Activated CD4-positive, alpha-beta T cell treated with anti-CD3 and anti-CD28 coated beads, Interleukin-2, amount 10 ng/mL, durations not matched to agents 7 days and 5 days (primary cell): ENCODE measurements at regions of chr1 and their contacts with region 1.

Region 1: DNA sequence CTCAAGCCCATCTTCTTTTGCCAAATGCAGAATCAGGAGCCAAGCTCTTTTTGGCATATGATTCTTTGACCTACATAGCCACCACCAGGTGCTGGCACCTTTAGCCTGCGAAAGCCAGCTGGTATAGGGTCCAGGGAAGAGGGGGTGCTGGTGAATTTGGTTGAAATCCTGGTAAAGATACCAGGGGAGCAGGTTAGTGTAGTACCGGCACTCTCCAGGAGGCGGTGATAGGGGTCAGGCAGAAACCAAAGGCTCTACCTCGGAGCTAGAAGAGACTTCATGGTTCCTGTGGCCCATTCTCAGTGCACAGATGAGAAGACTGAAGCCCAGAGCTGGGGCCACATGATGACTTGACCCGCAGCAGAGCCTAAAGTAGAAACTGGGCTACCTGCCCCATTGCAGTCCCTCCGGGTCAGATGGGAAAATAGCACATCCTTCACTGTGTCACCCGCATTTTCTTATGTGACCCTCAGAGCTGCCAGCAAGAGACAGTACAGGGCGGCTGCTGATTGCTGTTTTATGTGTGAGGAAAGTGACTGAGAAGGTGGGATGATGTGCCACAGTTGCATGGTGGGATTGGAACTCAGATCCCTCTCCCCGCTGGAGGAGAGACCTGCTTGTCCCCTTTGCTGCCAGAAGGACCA is 36.0 kb upstream of the IL19 start:
- DNase-seq: peak; percentile 80
- H3K4me3 Mint-ChIP-seq: no peak overlapping the region
- H3K27ac Mint-ChIP-seq: peak overlapping the region; percentile 78
- H3K4me1 Mint-ChIP-seq: peaks cover 68% of the 10 kb centered on the region
- H3K27me3 Mint-ChIP-seq: no peaks in the 10 kb centered on the region

Region 2: GRCh38 chr1:206663832-206664652 is 70.6 kb before region 1 on chr1:
- CTCF ChIA-PET with region 1: no interaction called
- POLR2A ChIA-PET with region 1: no interaction called
- DNase-seq: peak; percentile 78
- H3K4me3 Mint-ChIP-seq: no peak overlapping the region
- H3K27ac Mint-ChIP-seq: no peak overlapping the region
- H3K4me1 Mint-ChIP-seq: peaks cover 21% of the 10 kb centered on the region
- H3K27me3 Mint-ChIP-seq: peaks cover 26% of the 10 kb centered on the region

Region 3: DNA sequence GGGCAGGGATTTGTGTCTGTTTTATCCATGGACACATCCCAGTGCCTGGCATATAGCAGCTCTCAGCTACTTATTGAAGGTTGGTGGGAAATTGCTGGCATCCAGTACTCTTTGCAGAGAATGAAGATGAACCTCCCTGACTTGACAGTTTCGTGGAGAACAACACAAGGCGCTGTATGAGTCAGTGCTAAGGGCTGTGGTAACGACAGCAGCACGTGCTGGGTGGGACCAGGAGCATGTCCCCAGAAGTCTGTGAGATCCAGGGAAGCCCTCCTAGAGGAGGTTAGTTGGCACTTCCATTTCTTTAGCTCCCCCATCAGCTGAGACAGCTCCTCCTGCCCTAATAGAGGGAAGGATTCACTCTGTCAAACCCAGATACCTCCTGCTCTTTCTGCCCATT is 10.1 kb after region 1 on chr1:
- CTCF ChIA-PET with region 1: interaction called, 20 read pairs
- POLR2A ChIA-PET with region 1: no interaction called
- DNase-seq: no peak
- H3K4me3 Mint-ChIP-seq: no peak overlapping the region
- H3K27ac Mint-ChIP-seq: no peak overlapping the region
- H3K4me1 Mint-ChIP-seq: peaks cover 42% of the 10 kb centered on the region
- H3K27me3 Mint-ChIP-seq: peaks cover 11% of the 10 kb centered on the region

Region 4: GRCh38 chr1:206797534-206798383 is 63.1 kb after region 1 on chr1:
- CTCF ChIA-PET with region 1: interaction called, 102 read pairs
- POLR2A ChIA-PET with region 1: interaction called, 4 read pairs
- DNase-seq: no peak
- H3K4me3 Mint-ChIP-seq: no peak overlapping the region
- H3K27ac Mint-ChIP-seq: no peak overlapping the region
- H3K4me1 Mint-ChIP-seq: peaks cover 38% of the 10 kb centered on the region
- H3K27me3 Mint-ChIP-seq: peaks cover 35% of the 10 kb centered on the region

Region 5: DNA sequence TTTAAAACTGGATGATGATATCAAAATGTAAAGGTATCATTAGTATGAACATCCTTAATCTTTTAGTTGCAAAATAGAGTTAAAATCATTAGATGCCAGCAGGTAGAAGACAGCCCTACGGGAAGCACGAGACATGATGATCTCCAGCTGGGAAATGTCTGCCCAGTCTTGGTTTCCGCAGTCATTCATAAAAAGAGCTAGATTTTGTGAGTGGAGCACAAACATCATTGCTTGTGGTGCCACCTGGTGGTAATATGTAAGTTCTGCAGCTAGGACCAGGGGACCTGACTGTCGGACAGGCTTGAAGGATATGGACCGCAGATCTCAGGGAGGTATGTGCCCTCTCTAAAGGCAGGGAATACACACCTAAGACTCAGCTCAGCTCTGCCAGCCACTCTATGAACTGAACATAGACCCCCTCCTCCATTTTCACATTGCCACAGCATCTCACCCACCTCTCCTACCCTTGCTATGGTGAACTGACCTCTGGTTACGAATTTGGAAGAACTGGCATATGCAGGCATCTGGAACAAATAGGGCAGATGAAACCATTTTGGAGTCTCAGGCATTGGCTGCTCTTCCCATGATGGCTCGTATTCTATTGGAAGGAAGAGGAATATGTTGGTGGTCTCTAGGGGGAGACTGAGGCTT is 177.9 kb after region 1 on chr1:
- CTCF ChIA-PET with region 1: interaction called, 14 read pairs
- POLR2A ChIA-PET with region 1: no interaction called
- DNase-seq: peak; percentile 76
- H3K4me3 Mint-ChIP-seq: no peak overlapping the region
- H3K27ac Mint-ChIP-seq: no peak overlapping the region
- H3K4me1 Mint-ChIP-seq: peaks cover 88% of the 10 kb centered on the region
- H3K27me3 Mint-ChIP-seq: no peaks in the 10 kb centered on the region

Region 6: DNA sequence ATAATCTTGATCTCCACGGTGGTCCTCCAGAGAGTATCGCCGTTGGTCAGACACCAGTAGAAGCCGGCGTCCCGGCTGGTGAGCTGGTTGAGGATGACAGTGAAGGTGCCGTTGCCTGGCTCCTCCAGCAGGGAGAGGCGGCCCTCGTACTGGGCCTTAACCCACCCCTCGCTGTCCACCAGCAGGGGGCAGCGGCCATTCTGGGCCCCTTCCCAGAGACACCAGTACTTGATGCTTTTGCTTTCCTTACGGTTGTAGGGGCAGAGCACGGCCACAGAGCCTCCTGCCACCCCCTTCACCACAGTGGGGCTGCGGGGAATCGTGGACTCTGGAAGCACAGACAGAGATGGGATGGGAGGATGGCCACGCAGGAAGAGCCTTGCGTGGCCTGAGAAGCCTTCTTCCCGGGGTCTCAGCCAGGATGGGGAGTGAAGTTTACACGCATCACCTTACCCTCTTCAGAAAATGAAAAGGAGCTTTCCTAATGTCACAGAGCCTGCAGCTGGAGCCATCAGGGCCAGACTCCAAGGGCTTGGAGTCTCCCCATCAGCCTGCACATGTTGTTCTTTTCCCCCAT is 201.0 kb after region 1 on chr1:
- CTCF ChIA-PET with region 1: interaction called, 13 read pairs
- POLR2A ChIA-PET with region 1: no interaction called
- DNase-seq: peak; percentile 68
- H3K4me3 Mint-ChIP-seq: no peak overlapping the region
- H3K27ac Mint-ChIP-seq: no peak overlapping the region
- H3K4me1 Mint-ChIP-seq: peaks cover 15% of the 10 kb centered on the region
- H3K27me3 Mint-ChIP-seq: no peaks in the 10 kb centered on the region